Activated CD4-positive, alpha-beta memory T cell treated with anti-CD3 and anti-CD28 coated beads for 36 hours (primary cell): ENCODE measurements at regions of chr17 and their contacts with region 1.

Region 1: GRCh38 chr17:2303204-2304188 is at the starts of genes SMG6 and SRR:
- DNase-seq: peak; percentile 96
- H3K4me3 Mint-ChIP-seq: peak within 1 kb of the TSS; percentile 90
- H3K27ac Mint-ChIP-seq: peak within 1 kb of the TSS; percentile 75
- H3K4me1 Mint-ChIP-seq: peaks cover 46% of the 10 kb centered on the region
- H3K27me3 Mint-ChIP-seq: no peaks in the 10 kb centered on the region
- total RNA-seq, gene SMG6: 17.2 to 20.3 TPM
- total RNA-seq, gene SRR: 20.0 to 22.2 TPM

Region 2: GRCh38 chr17:2207815-2208515 is 95.5 kb before region 1 on chr17:
- CTCF ChIA-PET with region 1: no interaction called
- POLR2A ChIA-PET with region 1: no interaction called
- intact Hi-C with region 1: no loop called
- DNase-seq: no peak
- H3K4me3 Mint-ChIP-seq: no peak overlapping the region
- H3K27ac Mint-ChIP-seq: no peak overlapping the region
- H3K4me1 Mint-ChIP-seq: peaks cover 24% of the 10 kb centered on the region
- H3K27me3 Mint-ChIP-seq: no peaks in the 10 kb centered on the region

Region 3: DNA sequence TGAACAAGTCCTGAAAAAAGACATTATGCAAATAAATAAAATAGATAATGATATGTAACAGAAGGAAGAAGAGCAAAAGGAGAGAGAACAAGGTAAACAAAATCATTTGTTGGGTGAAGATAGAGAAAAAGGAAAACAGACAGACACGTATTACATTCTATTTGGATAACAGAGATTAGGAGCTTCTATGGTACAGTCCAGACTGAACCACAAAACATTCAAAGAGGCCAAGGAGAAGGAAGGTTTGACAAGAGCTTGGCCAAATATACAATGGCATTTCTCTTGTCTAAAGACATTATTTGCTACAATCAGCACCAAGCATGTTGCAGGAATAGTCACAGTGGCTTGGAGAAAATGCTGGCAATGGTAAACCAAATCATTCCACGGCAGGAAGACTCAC is 29.1 kb before region 1 on chr17:
- CTCF ChIA-PET with region 1: no interaction called
- POLR2A ChIA-PET with region 1: no interaction called
- intact Hi-C with region 1: no loop called
- DNase-seq: no peak
- H3K4me3 Mint-ChIP-seq: no peak overlapping the region
- H3K27ac Mint-ChIP-seq: peak overlapping the region; percentile 26
- H3K4me1 Mint-ChIP-seq: peaks cover 55% of the 10 kb centered on the region
- H3K27me3 Mint-ChIP-seq: no peaks in the 10 kb centered on the region

Region 4: DNA sequence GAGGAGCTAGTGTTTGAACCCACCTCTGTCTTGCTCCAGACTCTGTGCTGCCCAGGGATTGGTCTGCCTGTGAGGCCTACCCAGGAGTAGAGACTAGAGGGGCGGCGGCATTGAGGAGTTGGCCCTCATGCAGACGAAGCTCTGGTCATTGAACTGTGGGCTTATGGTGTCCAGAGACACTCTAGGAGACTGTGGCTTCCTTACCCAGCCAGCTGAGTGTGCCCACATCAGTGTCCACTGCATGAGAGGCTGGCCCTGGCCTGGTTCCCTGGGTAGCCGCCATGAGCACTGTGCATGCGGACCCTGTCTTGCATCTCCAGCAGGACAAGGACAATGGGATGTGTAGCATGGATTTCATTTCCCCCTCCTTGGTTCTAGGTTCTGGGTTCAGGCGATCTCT is 47.8 kb after region 1 on chr17:
- CTCF ChIA-PET with region 1: interaction called, 7 read pairs
- POLR2A ChIA-PET with region 1: interaction called, 3 read pairs
- intact Hi-C with region 1: loop called (anchors 5 kb)
- DNase-seq: no peak
- H3K4me3 Mint-ChIP-seq: no peak overlapping the region
- H3K27ac Mint-ChIP-seq: no peak overlapping the region
- H3K4me1 Mint-ChIP-seq: peaks cover 17% of the 10 kb centered on the region
- H3K27me3 Mint-ChIP-seq: no peaks in the 10 kb centered on the region

Region 5: GRCh38 chr17:2369551-2370210 is 66.2 kb after region 1 on chr17:
- CTCF ChIA-PET with region 1: no interaction called
- POLR2A ChIA-PET with region 1: no interaction called
- intact Hi-C with region 1: no loop called
- DNase-seq: no peak
- H3K4me3 Mint-ChIP-seq: no peak overlapping the region
- H3K27ac Mint-ChIP-seq: no peak overlapping the region
- H3K4me1 Mint-ChIP-seq: no peaks in the 10 kb centered on the region
- H3K27me3 Mint-ChIP-seq: no peaks in the 10 kb centered on the region

Region 6: GRCh38 chr17:2796164-2797125 is 492.9 kb after region 1 on chr17 and contains the start of gene RAP1GAP2:
- CTCF ChIA-PET with region 1: no interaction called
- POLR2A ChIA-PET with region 1: no interaction called
- intact Hi-C with region 1: no loop called
- DNase-seq: peak; percentile 80
- H3K4me3 Mint-ChIP-seq: peak within 1 kb of the TSS; percentile 74
- H3K27ac Mint-ChIP-seq: no peak within 1 kb of the TSS
- H3K4me1 Mint-ChIP-seq: peaks cover 66% of the 10 kb centered on the region
- H3K27me3 Mint-ChIP-seq: peaks cover 17% of the 10 kb centered on the region
- total RNA-seq, gene RAP1GAP2: 1.9 to 2.3 TPM